ENCODE measurements at regions of chr1 and their contacts with region 1.

Region 1: DNA sequence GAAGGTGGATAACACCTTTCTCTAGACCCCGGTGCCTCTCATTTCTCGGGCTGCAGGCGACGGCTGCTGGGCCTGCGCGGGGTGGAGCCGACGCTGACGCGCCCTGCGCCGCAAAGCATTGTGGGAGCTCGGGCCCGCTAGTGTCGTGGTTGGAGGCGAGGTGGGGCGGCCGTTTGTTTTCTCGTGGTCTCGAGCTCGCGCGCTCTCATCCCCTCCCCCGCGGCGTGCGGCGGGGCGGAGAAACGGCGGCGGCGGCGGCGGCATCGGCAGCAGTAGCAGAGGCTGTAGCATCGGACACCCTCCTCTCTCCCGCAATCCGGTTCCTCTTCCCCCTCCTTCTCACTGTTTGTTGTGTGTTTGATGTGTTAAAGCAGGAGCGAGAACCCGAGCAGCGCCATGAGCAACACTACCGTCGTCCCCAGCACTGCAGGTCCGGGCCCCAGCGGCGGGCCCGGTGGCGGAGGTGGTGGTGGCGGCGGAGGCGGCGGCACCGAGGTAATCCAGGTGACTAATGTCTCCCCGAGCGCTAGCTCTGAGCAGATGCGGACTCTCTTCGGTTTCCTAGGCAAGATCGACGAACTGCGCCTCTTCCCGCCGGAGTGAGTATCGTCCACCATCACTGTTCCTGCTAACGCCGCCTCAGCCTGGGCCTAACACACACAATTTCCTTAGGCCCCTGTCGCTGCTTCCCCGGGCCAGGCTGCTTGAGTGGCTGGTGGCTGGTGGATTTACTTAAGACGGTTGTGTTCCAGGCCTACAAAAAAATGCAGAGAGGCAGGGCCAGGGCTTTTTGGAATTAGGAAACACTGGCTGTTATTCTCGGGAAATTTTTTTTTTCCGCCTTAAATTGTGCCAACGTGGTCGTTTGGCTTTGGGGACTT is at the start of gene SRSF11:
- DNase-seq: peak; percentile 96 to 98
- H3K4me3 ChIP-seq: peak within 1 kb of the TSS; percentile 74 to 81
- H3K27ac ChIP-seq: peak within 1 kb of the TSS; percentile 93 to 98
- H3K4me1 ChIP-seq: peaks cover 0 to 50% (median 28%) of the 10 kb centered on the region in 4 donors
- H3K27me3 ChIP-seq: no peaks in the 10 kb centered on the region
- CTCF ChIP-seq: peak in 1 of 2 experiments; percentile 18

Region 2: DNA sequence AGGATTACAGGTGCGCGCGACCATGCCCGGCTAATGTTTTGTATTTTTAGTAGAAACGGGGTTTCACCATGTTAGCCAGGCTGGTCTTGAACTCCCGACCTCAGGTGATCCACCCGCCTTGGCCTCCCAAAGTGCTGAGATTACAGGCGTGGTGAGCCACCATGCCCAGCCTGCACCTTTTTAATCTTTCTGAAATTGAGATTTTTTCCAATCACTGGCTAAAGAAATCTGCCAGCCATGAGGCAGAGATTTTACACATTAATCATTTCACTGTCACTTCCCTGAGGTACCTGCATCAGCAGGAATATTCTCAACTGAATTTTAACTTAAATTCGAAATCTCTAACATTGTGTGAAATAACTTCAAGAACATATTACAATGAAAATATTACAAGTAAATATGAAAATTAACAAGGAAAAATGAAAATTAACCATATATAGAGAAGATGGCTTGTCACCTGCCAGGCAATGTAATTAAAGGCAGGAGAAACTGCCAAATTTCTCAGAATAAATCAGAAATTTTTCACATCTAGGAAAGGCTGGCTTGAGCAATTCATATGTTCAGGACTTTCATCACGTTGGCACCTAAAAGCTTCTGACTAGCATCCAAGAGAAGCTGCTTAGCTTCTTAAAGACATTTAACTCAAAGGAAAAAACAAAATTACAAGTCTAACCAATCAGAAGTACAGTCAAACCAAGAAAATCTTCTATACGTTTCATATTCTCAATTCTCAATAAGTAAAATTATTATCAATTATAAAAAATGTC is 127.1 kb after region 1 on chr1:
- intact Hi-C with region 1: loop called (anchors 10 kb)
- DNase-seq: no peak
- H3K4me3 ChIP-seq: no peak overlapping the region
- H3K27ac ChIP-seq: no peak overlapping the region
- H3K4me1 ChIP-seq: peaks cover 0 to 64% (median 22%) of the 10 kb centered on the region in 4 donors
- H3K27me3 ChIP-seq: no peaks in the 10 kb centered on the region
- CTCF ChIP-seq: no peak

Region 3: DNA sequence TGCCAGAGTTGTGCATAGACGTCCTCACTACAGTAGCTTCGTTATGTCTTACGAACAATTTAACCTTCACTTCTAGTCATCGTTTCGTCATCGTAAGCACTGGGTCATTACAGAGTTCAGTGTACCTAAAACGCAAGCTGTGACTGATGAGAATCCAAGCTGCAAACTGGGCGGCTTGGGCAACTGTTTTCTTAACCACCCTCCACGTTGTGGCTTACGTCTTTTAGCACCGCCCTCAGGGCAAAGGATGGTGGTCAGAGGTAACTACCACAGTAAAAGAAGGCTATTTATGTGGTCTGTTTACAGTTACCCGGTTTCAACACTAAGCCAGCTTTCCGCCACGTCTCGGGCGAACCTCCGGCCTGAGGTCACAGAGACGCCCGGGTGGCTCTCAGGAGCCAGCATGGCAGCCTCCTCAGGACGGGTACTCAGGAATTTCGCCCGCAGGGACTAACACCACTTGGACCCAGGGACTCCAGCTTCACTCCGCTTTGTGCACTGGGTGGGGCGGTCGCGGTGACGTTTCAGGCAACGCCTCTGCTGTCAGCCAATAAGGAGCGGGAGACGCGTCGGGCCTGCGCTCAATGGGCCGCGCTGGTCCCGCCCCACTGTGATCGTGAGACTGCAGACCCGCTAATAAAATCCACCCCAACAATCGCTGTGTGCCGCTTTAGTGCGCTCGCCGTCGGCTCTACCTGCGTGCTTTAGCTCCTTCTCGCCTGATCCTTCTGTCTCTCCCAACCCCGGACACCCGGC is 189.3 kb after region 1 on chr1 and contains the start of gene CTH:
- intact Hi-C with region 1: loop called (anchors 10 kb)
- DNase-seq: peak; percentile 97 to 99
- H3K4me3 ChIP-seq: peak within 1 kb of the TSS; percentile 66 to 75
- H3K27ac ChIP-seq: peak within 1 kb of the TSS; percentile 91 to 97
- H3K4me1 ChIP-seq: peaks cover 0 to 22% (median 12%) of the 10 kb centered on the region in 4 donors
- H3K27me3 ChIP-seq: no peaks in the 10 kb centered on the region
- CTCF ChIP-seq: no peak

Measured in tibial artery (tissue), 4 donors.